ENCODE measurements at regions of chr2 and their contacts with region 1.

Region 1: GRCh38 chr2:207473049-207473930 is 56.5 kb upstream of the CREB1 start:
- DNase-seq: no peak
- H3K4me3 ChIP-seq: no peak overlapping the region
- H3K4me3 Mint-ChIP-seq: no peak overlapping the region
- H3K27ac ChIP-seq: no peak overlapping the region
- H3K27ac Mint-ChIP-seq: no peak overlapping the region
- H3K4me1 ChIP-seq: peaks cover 3 to 4% of the 10 kb centered on the region in 2 donors
- H3K4me1 Mint-ChIP-seq: peaks cover 19% of the 10 kb centered on the region
- H3K27me3 ChIP-seq: no peaks in the 10 kb centered on the region
- H3K27me3 Mint-ChIP-seq: peaks cover 0 to 2% (median 2%) of the 10 kb centered on the region in 3 donors
- CTCF ChIP-seq: peak; percentile 17

Region 2: DNA sequence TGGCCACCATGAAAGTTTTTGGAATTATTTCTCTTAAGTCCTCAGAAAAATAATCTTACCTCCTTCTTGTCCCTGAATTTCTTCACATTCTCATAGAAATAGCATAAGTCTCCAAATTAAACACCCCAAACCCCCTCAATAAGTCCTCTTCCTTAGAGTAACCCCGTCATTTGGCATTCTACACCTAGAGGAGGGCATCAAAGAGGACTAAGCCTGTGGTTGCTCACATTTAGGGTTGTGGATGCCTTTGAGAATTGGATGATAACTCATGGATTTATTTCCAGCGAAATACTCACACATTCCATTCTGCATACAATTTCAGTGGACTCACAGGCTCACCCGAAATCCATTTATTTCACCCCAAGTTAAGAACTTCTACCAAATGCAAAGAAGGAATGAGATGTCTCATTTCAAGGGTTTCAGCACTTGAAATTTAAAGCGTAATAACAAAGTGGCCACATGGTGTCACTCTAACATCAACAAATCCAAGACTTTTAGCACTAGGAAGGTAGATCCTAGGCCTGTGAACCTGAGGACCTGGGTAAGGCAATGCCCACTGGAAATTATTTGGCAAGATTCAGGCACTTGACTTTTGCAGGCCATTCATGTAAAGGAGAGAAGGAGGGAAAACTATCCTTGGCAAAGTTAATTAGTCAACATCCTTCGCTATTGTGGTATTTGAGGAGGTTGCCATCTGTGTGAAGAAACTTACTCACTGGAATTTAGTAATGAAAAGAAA is 779.7 kb before region 1 on chr2:
- intact Hi-C with region 1: loop called (anchors 5 to 10 kb)
- DNase-seq: peak; percentile 16 to 53 (median 49)
- H3K4me3 ChIP-seq: no peak overlapping the region
- H3K4me3 Mint-ChIP-seq: no peak overlapping the region
- H3K27ac ChIP-seq: no peak overlapping the region
- H3K27ac Mint-ChIP-seq: no peak overlapping the region
- H3K4me1 ChIP-seq: no peaks in the 10 kb centered on the region
- H3K4me1 Mint-ChIP-seq: peaks cover 1% of the 10 kb centered on the region
- H3K27me3 ChIP-seq: no peaks in the 10 kb centered on the region
- H3K27me3 Mint-ChIP-seq: no peaks in the 10 kb centered on the region
- CTCF ChIP-seq: peak; percentile 74

Region 3: DNA sequence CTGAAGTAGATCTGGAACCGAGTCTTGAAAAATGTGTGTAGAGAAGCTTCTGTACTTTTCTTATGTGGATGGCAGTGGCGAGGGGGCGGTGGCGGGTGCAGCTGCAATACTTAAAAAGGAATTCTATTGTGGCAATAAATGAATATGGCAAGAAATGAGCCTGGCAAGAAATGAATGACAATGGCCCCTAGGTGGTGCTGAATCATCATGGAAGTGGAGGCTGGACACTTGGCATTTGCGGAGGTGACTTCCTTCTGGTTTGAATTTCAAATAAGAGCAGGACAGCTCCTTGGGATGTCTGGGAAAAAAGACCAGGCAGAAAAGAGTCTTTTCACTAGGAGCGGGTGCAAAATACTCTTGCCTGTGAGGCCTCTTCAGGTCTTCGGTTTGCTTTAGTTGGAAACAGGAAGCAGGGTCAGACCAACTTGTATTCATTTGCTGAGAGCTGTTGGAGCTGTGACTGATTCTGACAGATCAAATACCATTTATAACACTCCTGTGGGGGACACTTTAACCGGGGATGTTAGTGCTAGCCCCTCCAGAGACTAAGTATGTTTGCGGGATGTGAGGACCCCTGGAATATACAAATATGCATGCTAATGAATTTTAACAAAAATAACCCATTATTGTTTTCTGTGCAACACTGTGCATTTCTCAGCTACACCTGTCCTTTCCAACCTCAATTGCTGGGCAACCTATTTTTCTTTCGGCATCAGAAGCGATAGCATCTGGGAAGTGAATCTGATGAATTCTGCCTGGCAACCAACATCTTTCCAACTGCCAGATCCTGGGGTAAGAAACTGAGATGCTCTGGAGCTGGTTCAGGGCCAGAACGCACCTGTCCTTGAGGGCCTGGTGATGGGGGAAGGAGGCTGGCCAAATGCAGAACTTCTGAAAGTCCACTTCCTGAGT is 672.5 kb before region 1 on chr2:
- intact Hi-C with region 1: loop called (anchors 2 to 5 kb)
- DNase-seq: peak; percentile 28 to 67 (median 62)
- H3K4me3 ChIP-seq: peak overlapping the region; percentile 8 to 65 (median 51)
- H3K4me3 Mint-ChIP-seq: peak overlapping the region; percentile 75 to 92
- H3K27ac ChIP-seq: peak overlapping the region in 1 of 2 donors; percentile 50
- H3K27ac Mint-ChIP-seq: peak overlapping the region in 6 of 7 donors; percentile 38 to 88 (median 77)
- H3K4me1 ChIP-seq: peaks cover 39 to 42% of the 10 kb centered on the region in 2 donors
- H3K4me1 Mint-ChIP-seq: peaks cover 47% of the 10 kb centered on the region
- H3K27me3 ChIP-seq: no peaks in the 10 kb centered on the region
- H3K27me3 Mint-ChIP-seq: no peaks in the 10 kb centered on the region
- CTCF ChIP-seq: peak; percentile 78

Region 4: GRCh38 chr2:206981739-206982340 is 491.4 kb before region 1 on chr2:
- intact Hi-C with region 1: loop called (anchors 10 kb)
- DNase-seq: peak in 2 of 3 donors; percentile 12 to 17
- H3K4me3 ChIP-seq: no peak overlapping the region
- H3K4me3 Mint-ChIP-seq: no peak overlapping the region
- H3K27ac ChIP-seq: no peak overlapping the region
- H3K27ac Mint-ChIP-seq: no peak overlapping the region
- H3K4me1 ChIP-seq: peaks cover 30 to 34% of the 10 kb centered on the region in 2 donors
- H3K4me1 Mint-ChIP-seq: peaks cover 34% of the 10 kb centered on the region
- H3K27me3 ChIP-seq: no peaks in the 10 kb centered on the region
- H3K27me3 Mint-ChIP-seq: peaks cover 0 to 2% (median 1%) of the 10 kb centered on the region in 3 donors
- CTCF ChIP-seq: peak; percentile 27

Region 5: DNA sequence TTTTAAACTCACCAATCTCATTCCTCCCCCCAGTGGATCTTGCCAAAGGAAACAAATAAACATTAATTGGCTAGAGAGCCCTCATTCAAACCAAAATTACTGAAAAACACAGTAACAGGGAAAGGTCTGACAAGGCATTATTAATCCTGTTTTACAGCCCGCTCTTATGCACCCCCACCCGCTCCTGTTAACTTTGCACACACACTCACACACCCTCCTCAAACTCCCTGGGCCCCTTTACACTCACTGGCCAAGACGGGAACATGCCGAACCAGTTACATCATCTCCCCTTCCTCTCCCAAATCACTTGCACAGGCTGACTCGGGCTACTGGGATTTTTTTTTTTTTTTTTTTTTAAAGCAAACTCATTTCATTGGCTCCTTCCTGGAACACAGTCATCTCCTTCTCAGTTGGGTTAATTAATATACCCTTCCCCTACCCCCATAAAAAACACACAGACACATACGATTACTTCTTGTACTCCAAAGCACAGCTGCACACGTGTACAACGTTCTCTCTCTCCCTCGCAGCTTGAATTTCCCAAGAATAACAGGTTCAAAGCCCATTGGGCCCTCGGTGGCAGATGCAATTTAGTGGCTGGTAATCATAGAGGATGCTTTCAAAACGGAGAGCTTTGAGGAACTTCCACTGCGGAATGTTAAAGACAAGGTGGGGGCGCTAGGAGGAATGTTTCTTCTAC is 339.3 kb before region 1 on chr2:
- intact Hi-C with region 1: loop called in 1 of 2 experiments (anchors 10 kb)
- DNase-seq: peak in 1 of 3 donors; percentile 61
- H3K4me3 ChIP-seq: peak overlapping the region in 1 of 3 experiments; percentile 21
- H3K4me3 Mint-ChIP-seq: peak overlapping the region in 1 of 2 donors; percentile 28
- H3K27ac ChIP-seq: peak overlapping the region in 1 of 2 donors; percentile 84
- H3K27ac Mint-ChIP-seq: peak overlapping the region in 6 of 7 donors; percentile 39 to 83 (median 62)
- H3K4me1 ChIP-seq: peaks cover 76 to 98% of the 10 kb centered on the region in 2 donors
- H3K4me1 Mint-ChIP-seq: peaks cover 91% of the 10 kb centered on the region
- H3K27me3 ChIP-seq: no peaks in the 10 kb centered on the region
- H3K27me3 Mint-ChIP-seq: peaks cover 0 to 2% (median 0%) of the 10 kb centered on the region in 3 donors
- CTCF ChIP-seq: no peak